ENCODE measurements at regions of chr12 and their contacts with region 1.

Region 1: DNA sequence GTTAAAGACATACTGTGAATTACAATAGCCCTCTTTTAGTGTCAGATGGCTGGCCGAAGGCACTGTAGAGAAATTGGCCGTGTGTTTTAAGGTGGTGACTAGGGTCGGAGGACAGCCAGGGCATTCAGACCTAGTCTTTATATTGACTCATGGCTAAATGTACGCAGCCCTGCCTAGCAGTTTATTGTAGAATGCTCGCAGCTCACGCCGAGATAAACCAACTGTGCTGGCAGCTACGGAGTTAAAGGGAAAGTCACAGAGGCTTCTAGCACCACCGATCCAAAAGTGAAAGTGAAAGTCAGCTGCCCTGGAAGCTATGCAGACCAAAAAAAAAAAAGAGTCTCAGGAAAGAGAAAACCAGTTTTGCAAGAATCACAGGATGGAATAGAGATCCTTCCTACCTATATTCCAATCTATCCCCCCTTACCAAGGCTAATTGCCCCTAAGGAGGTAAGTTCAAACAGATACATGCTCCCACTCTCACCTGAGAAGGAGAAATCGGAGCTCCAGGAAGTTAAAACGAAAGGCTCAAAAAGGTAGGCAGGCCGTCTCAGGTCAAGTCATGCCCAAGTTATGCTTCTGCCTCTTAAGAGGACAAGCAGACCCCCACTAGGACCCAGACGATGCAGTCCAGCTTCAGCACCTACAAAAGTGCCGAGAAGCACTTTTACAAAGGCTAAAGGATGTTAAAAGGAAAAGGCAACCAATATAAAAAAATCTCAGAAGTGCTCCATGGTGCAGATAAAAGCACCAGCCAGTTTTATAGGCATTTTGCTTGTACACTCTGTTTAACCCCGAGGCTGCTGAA is 24.8 kb downstream of the KLRK1 start:
- DNase-seq: peak; percentile 90
- H3K4me3 Mint-ChIP-seq: no peak overlapping the region
- H3K27ac Mint-ChIP-seq: no peak overlapping the region
- H3K4me1 Mint-ChIP-seq: no peaks in the 10 kb centered on the region
- H3K27me3 Mint-ChIP-seq: peaks cover 36% of the 10 kb centered on the region

Region 2: GRCh38 chr12:10293570-10294227 is 71.3 kb before region 1 on chr12:
- intact Hi-C with region 1: loop called (anchors 5 kb)
- DNase-seq: peak; percentile 61
- H3K4me3 Mint-ChIP-seq: no peak overlapping the region
- H3K27ac Mint-ChIP-seq: no peak overlapping the region
- H3K4me1 Mint-ChIP-seq: peaks cover 7% of the 10 kb centered on the region
- H3K27me3 Mint-ChIP-seq: peaks cover 11% of the 10 kb centered on the region

Region 3: GRCh38 chr12:10320643-10321042 is 44.4 kb before region 1 on chr12:
- intact Hi-C with region 1: loop called (anchors 2 kb)
- DNase-seq: no peak
- H3K4me3 Mint-ChIP-seq: peak overlapping the region; percentile 0
- H3K27ac Mint-ChIP-seq: peak overlapping the region; percentile 77
- H3K4me1 Mint-ChIP-seq: peaks cover 15% of the 10 kb centered on the region
- H3K27me3 Mint-ChIP-seq: peaks cover 7% of the 10 kb centered on the region